CD8-positive, alpha-beta T cell (primary cell): ENCODE measurements at regions of chr14 and their contacts with region 1.

Region 1: DNA sequence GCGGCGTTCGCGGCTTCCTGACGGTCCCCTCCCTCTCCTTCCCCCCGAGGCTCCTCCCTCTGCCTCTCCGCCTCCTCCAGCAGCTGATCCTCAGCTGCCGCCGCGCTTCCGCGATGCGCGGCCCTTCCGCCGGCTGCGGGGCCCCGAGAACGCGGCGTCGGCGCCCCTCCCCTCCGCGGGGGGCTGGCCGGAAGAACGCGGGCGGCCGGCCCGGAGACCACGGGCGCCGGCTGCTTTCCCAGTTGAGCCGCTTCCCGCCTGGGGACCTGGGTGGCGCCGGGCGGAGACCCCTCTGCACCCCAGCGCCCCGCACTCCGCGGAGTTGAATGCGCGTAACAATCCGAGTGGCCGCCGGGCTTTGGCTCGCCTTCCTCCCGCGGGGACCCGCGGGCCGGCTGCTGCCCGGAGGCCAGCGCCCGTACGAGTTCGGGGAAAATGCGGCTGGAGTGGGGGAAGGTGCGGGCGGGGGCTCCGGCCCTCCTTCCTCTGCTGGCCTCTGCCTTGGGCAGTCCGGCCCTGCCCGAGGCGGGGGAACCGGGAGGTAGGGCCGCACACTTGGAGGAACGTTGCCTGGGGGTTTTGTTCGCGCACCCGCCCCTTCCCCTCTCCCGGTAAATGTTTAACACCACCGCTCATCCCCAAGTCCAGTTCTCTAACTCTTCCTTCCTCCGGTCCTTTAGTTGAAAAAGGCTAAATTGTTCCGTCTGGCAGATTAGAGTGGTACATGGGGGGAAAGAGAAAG is 383 bp upstream of the DCAF5 start:
- DNase-seq: peak; percentile 87 to 98 (median 93)
- ATAC-seq: peak; percentile 91
- H3K4me3 ChIP-seq: peak overlapping the region; percentile 93 to 95
- H3K4me3 Mint-ChIP-seq: peak overlapping the region; percentile 89
- H3K27ac ChIP-seq: peak overlapping the region; percentile 51 to 69
- H3K27ac Mint-ChIP-seq: peak overlapping the region; percentile 95
- H3K4me1 ChIP-seq: peaks cover 36% of the 10 kb centered on the region
- H3K4me1 Mint-ChIP-seq: peaks cover 33% of the 10 kb centered on the region
- H3K27me3 ChIP-seq: no peaks in the 10 kb centered on the region
- H3K27me3 Mint-ChIP-seq: no peaks in the 10 kb centered on the region
- CTCF ChIP-seq: no peak

Region 2: DNA sequence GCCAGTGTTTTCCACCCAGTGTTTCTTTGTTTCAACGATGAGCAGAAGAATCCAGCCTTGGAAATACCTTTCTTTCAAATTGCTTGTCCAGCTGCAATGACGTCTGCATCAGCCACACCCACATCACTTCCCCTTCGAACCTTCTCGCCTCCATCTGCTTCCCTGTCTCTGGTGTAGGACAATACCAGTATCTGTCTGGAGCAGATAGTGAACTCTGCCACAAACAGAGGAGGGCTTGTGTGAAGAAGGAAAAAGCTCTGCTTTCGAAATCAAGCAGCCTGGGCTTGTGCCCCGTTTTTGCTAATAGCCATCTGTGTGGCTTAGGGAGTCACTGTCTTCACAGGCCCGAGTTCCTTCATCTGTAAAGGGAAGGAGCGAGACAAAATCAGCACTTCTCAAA is 775.8 kb before region 1 on chr14:
- CTCF ChIA-PET with region 1: no interaction called
- POLR2A ChIA-PET with region 1: no interaction called
- intact Hi-C with region 1: no loop called
- DNase-seq: peak in 2 of 9 experiments; percentile 6 to 45
- ATAC-seq: no peak
- H3K4me3 ChIP-seq: no peak overlapping the region
- H3K4me3 Mint-ChIP-seq: no peak overlapping the region
- H3K27ac ChIP-seq: peak overlapping the region in 1 of 2 experiments; percentile 32
- H3K27ac Mint-ChIP-seq: peak overlapping the region; percentile 74
- H3K4me1 ChIP-seq: peaks cover 61% of the 10 kb centered on the region
- H3K4me1 Mint-ChIP-seq: peaks cover 68% of the 10 kb centered on the region
- H3K27me3 ChIP-seq: no peaks in the 10 kb centered on the region
- H3K27me3 Mint-ChIP-seq: no peaks in the 10 kb centered on the region
- CTCF ChIP-seq: no peak

Region 3: DNA sequence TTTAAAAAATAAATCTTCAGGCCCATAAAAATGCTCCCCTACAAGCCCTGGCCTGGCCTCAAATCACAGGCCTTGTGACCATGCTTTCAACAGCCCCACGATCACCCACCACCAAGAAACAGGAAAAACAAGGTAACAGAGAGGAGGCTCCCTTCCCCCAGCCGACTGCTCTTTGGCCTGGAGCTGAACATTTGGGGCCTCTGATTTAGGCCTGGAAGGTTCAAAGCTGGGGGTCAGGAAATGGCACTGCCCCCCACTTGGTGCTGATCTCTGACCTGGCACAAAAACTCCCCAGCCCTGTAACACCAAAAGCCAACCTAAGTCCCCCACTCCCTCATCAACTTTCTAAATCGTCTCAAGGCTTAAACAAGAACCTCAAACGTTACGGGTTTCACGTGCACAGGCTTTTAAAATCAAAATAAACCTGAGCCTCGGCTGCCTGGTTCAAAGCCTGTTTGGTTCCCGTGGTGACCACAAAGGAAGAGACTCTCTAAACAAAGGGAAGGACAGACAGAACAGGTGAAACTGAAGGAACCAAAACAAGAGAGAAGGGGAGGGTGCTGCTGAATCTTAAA is 183.2 kb before region 1 on chr14:
- CTCF ChIA-PET with region 1: no interaction called
- POLR2A ChIA-PET with region 1: no interaction called
- intact Hi-C with region 1: loop called (anchors 5 kb)
- DNase-seq: peak; percentile 30 to 86 (median 64)
- ATAC-seq: peak; percentile 59
- H3K4me3 ChIP-seq: peak overlapping the region; percentile 3 to 31
- H3K4me3 Mint-ChIP-seq: peak overlapping the region; percentile 81
- H3K27ac ChIP-seq: peak overlapping the region; percentile 67 to 73
- H3K27ac Mint-ChIP-seq: peak overlapping the region; percentile 93
- H3K4me1 ChIP-seq: peaks cover 97% of the 10 kb centered on the region
- H3K4me1 Mint-ChIP-seq: peaks cover 97% of the 10 kb centered on the region
- H3K27me3 ChIP-seq: no peaks in the 10 kb centered on the region
- H3K27me3 Mint-ChIP-seq: no peaks in the 10 kb centered on the region
- CTCF ChIP-seq: no peak

Region 4: GRCh38 chr14:68979021-68979782 is 174.1 kb before region 1 on chr14 and contains the start of gene ACTN1:
- CTCF ChIA-PET with region 1: no interaction called
- POLR2A ChIA-PET with region 1: interaction called, 4 read pairs
- intact Hi-C with region 1: loop called (anchors 5 kb)
- DNase-seq: peak; percentile 22 to 87 (median 72)
- ATAC-seq: peak; percentile 52
- H3K4me3 ChIP-seq: peak within 1 kb of the TSS; percentile 79 to 86
- H3K4me3 Mint-ChIP-seq: peak within 1 kb of the TSS; percentile 94
- H3K27ac ChIP-seq: peak within 1 kb of the TSS; percentile 48 to 70
- H3K27ac Mint-ChIP-seq: peak within 1 kb of the TSS; percentile 93
- H3K4me1 ChIP-seq: peaks cover 45% of the 10 kb centered on the region
- H3K4me1 Mint-ChIP-seq: peaks cover 58% of the 10 kb centered on the region
- H3K27me3 ChIP-seq: no peaks in the 10 kb centered on the region
- H3K27me3 Mint-ChIP-seq: no peaks in the 10 kb centered on the region
- CTCF ChIP-seq: no peak
- total RNA-seq, gene ACTN1: 153 to 161 TPM

Region 5: GRCh38 chr14:69191340-69192111 is 38.2 kb after region 1 on chr14 and contains the start of gene EXD2:
- CTCF ChIA-PET with region 1: interaction called, 6 read pairs
- POLR2A ChIA-PET with region 1: interaction called, 24 read pairs
- intact Hi-C with region 1: loop called (anchors 1 kb)
- DNase-seq: peak; percentile 36 to 87 (median 72)
- ATAC-seq: peak; percentile 79
- H3K4me3 ChIP-seq: peak within 1 kb of the TSS; percentile 72 to 91
- H3K4me3 Mint-ChIP-seq: peak within 1 kb of the TSS; percentile 95
- H3K27ac ChIP-seq: peak within 1 kb of the TSS; percentile 56 to 60
- H3K27ac Mint-ChIP-seq: peak within 1 kb of the TSS; percentile 97
- H3K4me1 ChIP-seq: peaks cover 7% of the 10 kb centered on the region
- H3K4me1 Mint-ChIP-seq: peaks cover 29% of the 10 kb centered on the region
- H3K27me3 ChIP-seq: no peaks in the 10 kb centered on the region
- H3K27me3 Mint-ChIP-seq: no peaks in the 10 kb centered on the region
- CTCF ChIP-seq: no peak
- total RNA-seq, gene EXD2: 5.9 to 7.9 TPM

Region 6: DNA sequence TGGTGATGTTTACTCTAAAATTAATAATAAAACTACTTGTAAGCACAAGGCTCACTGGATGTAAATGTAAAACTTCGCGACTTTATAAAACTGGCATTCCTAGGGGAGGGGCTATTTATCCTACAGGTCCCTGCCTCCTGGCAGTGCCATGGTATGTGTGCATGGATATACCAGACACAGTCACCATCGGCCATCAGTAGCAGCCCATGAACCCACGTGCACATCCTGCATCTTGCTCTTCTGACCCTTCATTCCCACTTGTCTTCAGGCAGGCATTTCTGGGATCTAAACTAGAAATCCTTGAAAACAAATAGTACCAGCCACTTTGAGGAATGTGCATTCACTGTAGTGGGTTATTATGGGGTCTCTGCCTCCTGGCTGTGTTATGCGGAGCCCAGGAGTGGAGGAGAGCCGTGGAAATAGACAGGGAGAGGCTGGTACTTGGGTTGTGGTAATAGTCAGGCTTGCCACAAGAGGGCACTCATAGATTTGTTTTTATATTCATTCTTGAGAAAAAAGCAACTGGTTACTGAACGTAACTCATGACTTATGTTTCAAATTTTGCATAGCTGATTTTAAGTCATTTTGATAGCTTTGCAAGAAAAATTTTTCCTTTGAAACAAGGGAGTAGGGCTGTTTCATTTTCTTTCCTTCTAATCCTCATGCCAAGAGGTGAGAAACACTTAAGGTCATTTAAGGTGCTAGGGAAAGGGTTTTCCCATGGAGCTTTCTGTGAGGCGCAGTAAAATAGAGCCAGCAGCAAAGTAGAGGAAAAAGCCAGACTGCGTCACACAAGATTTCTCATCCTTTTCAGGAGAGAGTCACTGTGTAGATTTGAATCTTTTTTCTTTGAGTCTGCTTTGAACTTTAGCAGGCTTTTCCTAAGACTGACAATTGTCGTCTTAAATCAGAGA is 89.3 kb after region 1 on chr14:
- CTCF ChIA-PET with region 1: interaction called, 3 read pairs
- POLR2A ChIA-PET with region 1: no interaction called
- intact Hi-C with region 1: loop called in 1 of 2 experiments (anchors 5 kb)
- DNase-seq: peak; percentile 15 to 71 (median 47)
- ATAC-seq: peak; percentile 69
- H3K4me3 ChIP-seq: no peak overlapping the region
- H3K4me3 Mint-ChIP-seq: no peak overlapping the region
- H3K27ac ChIP-seq: no peak overlapping the region
- H3K27ac Mint-ChIP-seq: no peak overlapping the region
- H3K4me1 ChIP-seq: no peaks in the 10 kb centered on the region
- H3K4me1 Mint-ChIP-seq: peaks cover 3% of the 10 kb centered on the region
- H3K27me3 ChIP-seq: no peaks in the 10 kb centered on the region
- H3K27me3 Mint-ChIP-seq: no peaks in the 10 kb centered on the region
- CTCF ChIP-seq: peak; percentile 86

Region 7: DNA sequence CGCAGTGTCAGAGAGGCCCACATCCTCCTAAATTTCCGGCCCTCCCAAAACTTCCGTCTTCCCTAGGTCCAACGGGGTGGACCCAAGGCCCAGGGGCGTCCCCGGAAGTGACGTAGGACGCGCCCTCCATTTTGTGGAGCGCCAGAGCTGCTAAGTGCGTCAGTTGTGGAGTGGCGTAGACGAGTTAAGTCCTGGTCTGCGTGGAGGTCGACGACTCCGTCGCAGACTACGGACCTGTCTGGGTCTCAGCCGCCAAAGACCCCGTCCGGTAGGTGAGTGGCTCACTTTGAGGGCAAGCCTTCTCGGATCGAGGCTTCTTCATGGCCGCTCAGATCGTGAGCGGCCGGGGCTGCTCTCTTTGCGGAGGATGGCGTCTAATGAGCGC is 613.7 kb after region 1 on chr14 and contains the start of gene SRSF5:
- CTCF ChIA-PET with region 1: no interaction called
- POLR2A ChIA-PET with region 1: no interaction called
- intact Hi-C with region 1: loop called (anchors 2 kb)
- DNase-seq: peak; percentile 86 to 97 (median 96)
- ATAC-seq: peak; percentile 80
- H3K4me3 ChIP-seq: peak within 1 kb of the TSS; percentile 78 to 88
- H3K4me3 Mint-ChIP-seq: peak within 1 kb of the TSS; percentile 99
- H3K27ac ChIP-seq: peak within 1 kb of the TSS; percentile 97 to 99
- H3K27ac Mint-ChIP-seq: peak within 1 kb of the TSS; percentile 100
- H3K4me1 ChIP-seq: peaks cover 50% of the 10 kb centered on the region
- H3K4me1 Mint-ChIP-seq: peaks cover 67% of the 10 kb centered on the region
- H3K27me3 ChIP-seq: no peaks in the 10 kb centered on the region
- H3K27me3 Mint-ChIP-seq: no peaks in the 10 kb centered on the region
- CTCF ChIP-seq: no peak
- total RNA-seq, gene SRSF5: 1,544 to 1,597 TPM

Region 8: DNA sequence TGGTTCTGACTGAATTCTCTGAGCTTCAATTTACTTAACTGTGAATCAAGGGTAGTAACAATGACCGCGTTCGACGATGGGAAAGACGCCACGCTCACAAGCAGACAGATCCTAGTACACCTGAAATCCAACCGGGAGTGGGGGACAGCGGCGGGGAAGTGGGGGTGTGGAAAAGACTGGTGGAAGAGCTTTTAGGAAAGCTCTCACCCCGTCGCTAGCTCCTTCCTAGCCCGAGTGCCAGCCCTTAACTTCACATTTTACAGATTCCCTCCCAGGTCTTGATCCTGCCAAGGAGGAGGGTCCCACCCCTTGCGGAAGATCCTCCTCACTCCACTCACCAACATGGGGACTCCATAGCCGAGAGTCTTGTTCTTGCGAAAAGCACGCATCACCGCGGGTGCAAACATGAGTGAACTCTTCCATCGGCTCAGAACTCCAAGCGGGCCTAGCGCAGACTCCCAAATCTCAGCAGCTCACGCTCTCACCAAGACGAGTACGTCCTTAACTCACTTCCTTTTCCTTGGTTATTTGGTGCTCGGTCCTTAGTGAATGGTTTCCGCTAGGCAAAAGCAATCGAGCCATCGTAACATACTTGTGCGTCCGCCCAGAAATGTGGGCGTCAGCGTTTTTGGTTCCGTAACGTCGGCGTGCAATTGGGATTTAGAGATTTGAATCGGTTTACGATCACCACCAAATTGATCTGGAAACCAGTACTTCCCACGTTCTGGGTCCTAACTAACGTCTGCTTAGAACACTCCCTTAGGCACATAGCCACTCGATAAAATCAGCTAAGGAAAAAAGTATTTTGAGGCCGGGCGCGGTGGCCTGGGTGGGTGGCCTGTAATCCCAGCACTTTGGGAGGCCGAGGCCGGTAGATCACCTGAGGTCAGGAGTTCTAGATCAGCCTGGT is 1206.1 kb after region 1 on chr14 and contains the start of gene COX16:
- CTCF ChIA-PET with region 1: no interaction called
- POLR2A ChIA-PET with region 1: no interaction called
- intact Hi-C with region 1: loop called (anchors 1 to 2 kb)
- DNase-seq: peak; percentile 65 to 94 (median 79)
- ATAC-seq: peak; percentile 95
- H3K4me3 ChIP-seq: peak within 1 kb of the TSS; percentile 84 to 87
- H3K4me3 Mint-ChIP-seq: peak within 1 kb of the TSS; percentile 99
- H3K27ac ChIP-seq: peak within 1 kb of the TSS; percentile 56 to 75
- H3K27ac Mint-ChIP-seq: peak within 1 kb of the TSS; percentile 94
- H3K4me1 ChIP-seq: peaks cover 17% of the 10 kb centered on the region
- H3K4me1 Mint-ChIP-seq: peaks cover 47% of the 10 kb centered on the region
- H3K27me3 ChIP-seq: no peaks in the 10 kb centered on the region
- H3K27me3 Mint-ChIP-seq: no peaks in the 10 kb centered on the region
- CTCF ChIP-seq: no peak
- total RNA-seq, gene COX16: 15.4 to 22.4 TPM